ENCODE measurements at regions of chr9 and their contacts with region 1.

Region 1: GRCh38 chr9:105244003-105244733 is at the start of gene SLC44A1:
- DNase-seq: peak; percentile 95 to 96 (median 96)
- H3K4me3 ChIP-seq: peak within 1 kb of the TSS; percentile 88
- H3K27ac ChIP-seq: peak within 1 kb of the TSS; percentile 26 to 56
- H3K4me1 ChIP-seq: peaks cover 1% of the 10 kb centered on the region
- H3K27me3 ChIP-seq: no peaks in the 10 kb centered on the region
- CTCF ChIP-seq: no peak
- EP300 ChIP-seq: no peak
- POLR2A ChIP-seq: peak; percentile 43
- total RNA-seq, gene SLC44A1: 19.1 to 34.7 (median 30.0) TPM

Region 2: GRCh38 chr9:104991144-104991953 is 252.8 kb before region 1 on chr9:
- intact Hi-C with region 1: loop called in 1 of 4 experiments (anchors 5 kb)
- DNase-seq: peak; percentile 86 to 91 (median 91)
- H3K4me3 ChIP-seq: peak overlapping the region; percentile 60
- H3K27ac ChIP-seq: peak overlapping the region; percentile 53 to 89
- H3K4me1 ChIP-seq: peaks cover 7% of the 10 kb centered on the region
- H3K27me3 ChIP-seq: no peaks in the 10 kb centered on the region
- CTCF ChIP-seq: no peak
- EP300 ChIP-seq: no peak
- POLR2A ChIP-seq: peak; percentile 31

Measured in ovary (tissue), 10 donors.